ENCODE measurements at regions of chr6 and their contacts with region 1.

Region 1: GRCh38 chr6:1335367-1336037 is 23.6 kb downstream of the FOXQ1 start:
- DNase-seq: peak; percentile 88 to 97
- H3K4me3 ChIP-seq: peak overlapping the region; percentile 48
- H3K27ac ChIP-seq: peak overlapping the region; percentile 98
- H3K4me1 ChIP-seq: peaks cover 63% of the 10 kb centered on the region
- H3K27me3 ChIP-seq: no peaks in the 10 kb centered on the region
- CTCF ChIP-seq: no peak

Region 2: GRCh38 chr6:188821-189655 is 1146.5 kb before region 1 on chr6:
- CTCF ChIA-PET with region 1: no interaction called
- POLR2A ChIA-PET with region 1: no interaction called
- intact Hi-C with region 1: loop called (anchors 2 kb)
- DNase-seq: peak; percentile 69 to 86
- H3K4me3 ChIP-seq: no peak overlapping the region
- H3K27ac ChIP-seq: no peak overlapping the region
- H3K4me1 ChIP-seq: no peaks in the 10 kb centered on the region
- H3K27me3 ChIP-seq: peaks cover 12% of the 10 kb centered on the region; the same call in 1 of the 2 replicates
- CTCF ChIP-seq: peak; percentile 75

Region 3: GRCh38 chr6:617445-618100 is 717.9 kb before region 1 on chr6:
- CTCF ChIA-PET with region 1: no interaction called
- POLR2A ChIA-PET with region 1: no interaction called
- intact Hi-C with region 1: loop called (anchors 2 kb)
- DNase-seq: peak in 1 of 2 experiments; percentile 52
- H3K4me3 ChIP-seq: no peak overlapping the region
- H3K27ac ChIP-seq: no peak overlapping the region
- H3K4me1 ChIP-seq: no peaks in the 10 kb centered on the region
- H3K27me3 ChIP-seq: no peaks in the 10 kb centered on the region
- CTCF ChIP-seq: no peak

Region 4: DNA sequence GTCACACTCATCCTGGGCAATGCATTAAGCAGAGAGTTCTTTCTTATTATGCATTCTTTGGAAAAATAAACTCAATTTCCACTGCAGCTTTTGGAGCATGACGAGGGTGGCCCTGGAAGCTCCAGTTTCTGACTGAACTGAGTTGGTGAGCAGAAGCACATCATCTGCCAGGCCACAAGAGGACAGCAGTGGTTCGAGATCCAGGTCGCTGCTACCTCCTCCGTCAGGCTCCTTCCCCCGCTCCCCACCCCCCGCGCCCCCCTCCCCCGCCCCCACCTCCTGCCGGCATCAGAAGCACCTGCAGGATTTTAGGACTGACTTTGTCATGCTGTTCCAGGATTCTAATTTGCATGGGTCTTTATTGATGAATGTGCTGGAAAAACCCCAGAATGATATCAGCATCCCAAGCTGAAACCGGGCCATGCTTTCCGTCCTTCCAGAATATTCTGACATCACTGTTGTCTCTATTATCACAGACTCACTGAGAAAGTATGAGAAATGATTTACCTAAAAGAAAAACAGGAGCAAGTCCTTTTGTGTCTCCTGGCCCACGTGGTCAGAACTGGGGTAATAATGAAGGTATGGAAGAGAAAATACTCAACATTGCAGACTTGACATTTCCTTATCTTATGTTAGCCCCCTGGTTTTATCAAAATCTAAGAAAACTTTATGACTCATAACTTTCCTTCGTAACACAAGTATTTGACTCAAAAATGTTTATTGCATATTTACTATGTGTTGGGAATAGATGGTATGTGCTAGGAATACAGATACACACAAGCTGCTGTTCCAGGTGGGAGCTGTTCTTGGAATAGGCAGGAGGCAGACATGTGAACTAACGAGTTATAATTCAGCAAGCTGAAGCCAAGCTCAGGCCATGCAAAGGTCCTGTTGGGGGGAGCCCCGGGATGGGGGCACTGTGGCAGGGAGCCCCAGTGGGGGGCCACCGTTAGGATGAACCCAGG is 422.3 kb before region 1 on chr6:
- CTCF ChIA-PET with region 1: interaction called, 6 read pairs
- POLR2A ChIA-PET with region 1: no interaction called
- intact Hi-C with region 1: loop called (anchors 1 kb)
- DNase-seq: peak; percentile 34 to 58
- H3K4me3 ChIP-seq: no peak overlapping the region
- H3K27ac ChIP-seq: no peak overlapping the region
- H3K4me1 ChIP-seq: peaks cover 7% of the 10 kb centered on the region
- H3K27me3 ChIP-seq: no peaks in the 10 kb centered on the region
- CTCF ChIP-seq: peak; percentile 49

Region 5: DNA sequence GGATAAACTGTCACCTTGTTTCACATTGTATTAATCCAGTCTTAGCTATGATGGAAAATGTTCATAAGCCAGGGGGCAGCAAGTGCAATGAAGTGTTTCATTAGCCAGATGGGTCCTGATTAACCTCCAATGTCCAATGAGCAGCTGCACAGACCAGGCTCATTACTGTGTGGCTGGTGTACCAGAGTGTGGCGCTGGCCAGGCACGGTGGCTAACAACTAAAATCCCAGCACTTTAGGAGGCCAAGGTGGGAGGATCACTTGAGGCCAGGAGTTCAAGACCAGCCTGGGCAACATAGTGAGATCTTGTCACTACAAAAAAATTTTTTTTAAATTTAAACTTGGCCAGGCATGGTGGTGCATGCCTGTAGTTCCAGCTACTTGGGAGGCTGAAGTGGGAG is 225.3 kb before region 1 on chr6:
- CTCF ChIA-PET with region 1: interaction called, 3 read pairs
- POLR2A ChIA-PET with region 1: no interaction called
- intact Hi-C with region 1: loop called (anchors 1 kb)
- DNase-seq: peak in 1 of 2 experiments; percentile 7
- H3K4me3 ChIP-seq: no peak overlapping the region
- H3K27ac ChIP-seq: no peak overlapping the region
- H3K4me1 ChIP-seq: no peaks in the 10 kb centered on the region
- H3K27me3 ChIP-seq: no peaks in the 10 kb centered on the region
- CTCF ChIP-seq: no peak

Region 6: GRCh38 chr6:1286972-1287610 is 48.4 kb before region 1 on chr6:
- CTCF ChIA-PET with region 1: interaction called, 4 read pairs
- POLR2A ChIA-PET with region 1: no interaction called
- intact Hi-C with region 1: loop called (anchors 1 kb)
- DNase-seq: peak; percentile 87 to 99
- H3K4me3 ChIP-seq: no peak overlapping the region
- H3K27ac ChIP-seq: peak overlapping the region; percentile 86
- H3K4me1 ChIP-seq: peaks cover 38% of the 10 kb centered on the region
- H3K27me3 ChIP-seq: no peaks in the 10 kb centered on the region
- CTCF ChIP-seq: no peak

Measured in PC-9 (cell line).